Activated T-helper 1 cell treated with anti-CD3 and anti-CD28 coated beads, Interleukin-12 subunit alpha, Interleukin-12 subunit beta, Interleukin-2, Interleukin-4 antibody, amounts not matched to agents 30 ng/mL and 10 ng/mL and 1 ng/mL, durations not matched to agents 14 hours and 24 hours and 36 hours (primary cell): ENCODE measurements at regions of chr22 and their contacts with region 1.

Region 1: DNA sequence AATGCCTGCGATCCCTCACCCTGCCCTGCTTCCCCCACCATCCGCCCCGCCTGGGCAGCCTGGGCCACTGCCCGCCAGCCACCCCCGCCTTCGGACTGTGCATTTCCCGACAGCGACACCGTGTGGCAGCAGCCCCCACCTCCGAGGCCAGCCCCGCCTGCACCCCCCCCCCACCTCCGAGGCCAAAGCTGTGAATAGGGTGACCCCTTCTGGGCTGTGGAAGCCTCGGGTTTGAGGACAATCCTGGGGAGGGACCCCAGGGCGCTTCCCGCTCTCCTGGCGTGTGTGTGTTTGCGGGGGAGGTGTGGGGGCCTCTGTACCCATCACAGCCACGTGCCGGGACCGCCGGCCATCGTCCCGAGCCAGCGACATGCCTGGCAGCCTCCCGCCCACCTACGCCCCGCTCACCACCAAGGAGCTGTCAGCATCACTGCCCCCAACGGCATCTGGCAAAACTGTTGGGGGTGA is 33.8 kb upstream of the PPARA start:
- DNase-seq: peak; percentile 70
- H3K4me3 Mint-ChIP-seq: no peak overlapping the region
- H3K27ac Mint-ChIP-seq: no peak overlapping the region
- H3K4me1 Mint-ChIP-seq: no peaks in the 10 kb centered on the region
- H3K27me3 Mint-ChIP-seq: peaks cover 2% of the 10 kb centered on the region

Region 2: DNA sequence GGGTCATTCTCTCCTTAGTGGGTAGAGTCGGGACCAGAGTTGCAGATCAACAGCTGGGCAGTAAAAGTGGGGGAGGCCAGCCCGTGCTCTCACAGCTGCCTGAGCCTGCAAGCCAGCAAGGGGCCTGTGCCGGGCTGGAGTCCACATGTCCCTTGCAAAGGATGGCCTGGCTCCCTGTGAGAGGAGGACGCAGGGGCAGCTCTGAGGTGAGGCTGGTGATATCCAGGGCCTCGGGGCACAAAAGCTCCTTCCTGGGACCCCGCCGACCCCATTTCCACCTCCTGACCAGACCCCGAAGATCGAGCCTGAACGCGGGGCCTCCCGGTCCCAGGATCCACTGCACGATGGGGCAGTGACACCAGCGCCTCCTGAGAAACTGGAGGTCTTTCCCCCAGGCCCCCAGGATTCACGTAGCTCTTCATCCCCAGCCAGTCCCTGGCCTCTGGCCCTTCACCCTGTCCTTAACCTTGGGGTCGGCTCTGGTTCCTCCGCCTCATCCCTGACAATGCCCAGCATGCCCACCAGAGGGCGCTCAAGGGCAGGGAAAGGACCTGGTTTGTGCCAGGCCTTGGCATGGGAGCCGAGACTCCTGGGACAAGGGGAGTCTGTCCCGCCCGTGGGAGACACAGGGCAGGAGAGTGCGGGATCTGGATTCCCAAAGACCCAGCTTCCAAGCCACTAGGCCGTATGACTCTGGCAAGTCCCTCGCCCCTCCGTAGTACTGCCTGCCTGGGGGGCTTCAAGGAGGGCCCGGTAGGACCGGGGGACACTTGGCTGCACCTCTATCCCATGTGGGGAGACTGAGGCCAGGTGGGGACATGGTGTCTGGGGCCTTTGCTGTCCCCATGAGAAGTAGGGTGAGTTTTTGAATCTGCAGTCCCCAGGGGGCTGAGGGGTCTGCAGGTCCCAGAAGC is 121.8 kb before region 1 on chr22:
- intact Hi-C with region 1: loop called (anchors 1 kb)
- DNase-seq: peak; percentile 58
- H3K4me3 Mint-ChIP-seq: no peak overlapping the region
- H3K27ac Mint-ChIP-seq: no peak overlapping the region
- H3K4me1 Mint-ChIP-seq: no peaks in the 10 kb centered on the region
- H3K27me3 Mint-ChIP-seq: peaks cover 4% of the 10 kb centered on the region

Region 3: DNA sequence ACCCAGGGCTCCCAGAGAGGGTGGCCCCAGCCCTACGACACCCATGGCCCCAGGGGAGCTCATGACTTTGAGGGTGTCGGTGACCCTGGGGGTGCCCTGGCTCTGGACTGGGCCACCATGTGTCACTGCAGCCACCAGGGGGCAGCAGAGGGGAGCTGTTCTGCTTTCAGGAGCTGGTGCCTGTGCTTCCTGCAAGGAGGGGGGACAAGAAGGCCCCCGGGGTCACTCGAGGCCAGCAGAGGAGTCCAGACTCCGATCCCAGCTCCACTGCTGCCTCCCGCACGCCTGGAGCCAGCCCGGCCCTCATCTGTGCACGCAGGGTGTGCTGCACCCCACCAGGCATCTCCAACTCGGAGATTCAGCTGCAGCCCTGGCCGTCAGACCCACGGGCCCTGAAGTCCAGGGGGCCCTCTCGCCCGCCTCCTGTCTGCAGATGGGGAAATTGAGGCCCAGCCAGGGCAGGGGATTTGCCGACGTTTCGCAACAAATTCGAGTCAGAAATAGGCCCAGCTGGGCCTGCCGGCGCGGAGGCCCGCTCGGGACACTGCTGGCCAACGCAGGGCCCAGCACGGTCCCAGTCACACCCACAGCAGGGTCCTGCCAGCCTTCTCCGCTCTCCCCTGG is 110.0 kb before region 1 on chr22:
- intact Hi-C with region 1: loop called (anchors 1 kb)
- DNase-seq: peak; percentile 75
- H3K4me3 Mint-ChIP-seq: no peak overlapping the region
- H3K27ac Mint-ChIP-seq: no peak overlapping the region
- H3K4me1 Mint-ChIP-seq: peaks cover 5% of the 10 kb centered on the region
- H3K27me3 Mint-ChIP-seq: peaks cover 2% of the 10 kb centered on the region

Region 4: DNA sequence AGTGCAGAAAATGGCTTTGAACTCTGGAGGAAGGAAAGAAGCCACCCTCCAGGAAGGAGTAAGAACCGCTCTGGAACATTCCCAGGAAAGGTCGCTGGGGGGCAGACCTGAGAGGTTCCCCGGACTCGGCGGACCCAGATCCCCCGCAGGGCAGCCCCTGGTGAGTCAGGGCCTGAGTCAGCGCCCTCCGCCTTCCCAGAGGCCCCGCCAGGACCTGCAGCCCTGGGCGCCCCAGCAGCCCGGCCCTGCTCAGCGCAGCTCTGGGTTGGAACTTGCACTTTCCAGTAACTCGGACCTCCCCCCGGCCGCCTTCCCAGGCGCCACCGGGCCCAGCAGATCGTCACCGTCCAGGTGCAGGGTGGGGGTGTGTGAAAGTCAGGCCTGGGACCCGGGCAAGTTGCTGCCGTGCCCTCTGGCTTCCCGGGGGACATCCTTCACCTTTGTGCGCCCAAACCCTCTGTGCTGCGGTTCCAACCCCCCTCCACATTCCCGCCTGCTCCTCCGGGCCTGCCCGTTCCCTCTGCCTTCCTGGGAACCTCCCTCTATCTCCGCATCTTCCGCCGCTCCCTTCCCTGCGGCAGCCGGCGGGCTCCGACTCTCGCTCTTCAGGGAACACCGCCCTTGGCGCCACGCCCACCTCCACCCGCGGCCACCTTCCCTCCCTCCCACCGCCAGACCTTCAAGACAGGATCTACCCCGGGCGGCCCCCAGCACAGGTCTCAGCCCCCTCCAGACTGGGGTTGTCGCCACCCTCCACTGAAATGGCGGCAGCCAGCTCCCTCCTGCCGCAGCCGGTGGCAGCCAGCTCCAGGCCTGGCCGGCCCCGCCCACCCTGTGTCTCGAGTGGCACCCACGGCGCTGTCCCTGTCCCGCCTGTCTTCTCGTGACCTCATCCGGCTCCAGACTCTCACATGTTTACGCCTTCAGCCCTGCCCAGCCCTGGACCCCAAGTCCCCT is 102.8 kb before region 1 on chr22:
- intact Hi-C with region 1: loop called (anchors 1 kb)
- DNase-seq: peak; percentile 66
- H3K4me3 Mint-ChIP-seq: peak overlapping the region; percentile 87
- H3K27ac Mint-ChIP-seq: peak overlapping the region; percentile 82
- H3K4me1 Mint-ChIP-seq: peaks cover 6% of the 10 kb centered on the region
- H3K27me3 Mint-ChIP-seq: peaks cover 12% of the 10 kb centered on the region

Region 5: DNA sequence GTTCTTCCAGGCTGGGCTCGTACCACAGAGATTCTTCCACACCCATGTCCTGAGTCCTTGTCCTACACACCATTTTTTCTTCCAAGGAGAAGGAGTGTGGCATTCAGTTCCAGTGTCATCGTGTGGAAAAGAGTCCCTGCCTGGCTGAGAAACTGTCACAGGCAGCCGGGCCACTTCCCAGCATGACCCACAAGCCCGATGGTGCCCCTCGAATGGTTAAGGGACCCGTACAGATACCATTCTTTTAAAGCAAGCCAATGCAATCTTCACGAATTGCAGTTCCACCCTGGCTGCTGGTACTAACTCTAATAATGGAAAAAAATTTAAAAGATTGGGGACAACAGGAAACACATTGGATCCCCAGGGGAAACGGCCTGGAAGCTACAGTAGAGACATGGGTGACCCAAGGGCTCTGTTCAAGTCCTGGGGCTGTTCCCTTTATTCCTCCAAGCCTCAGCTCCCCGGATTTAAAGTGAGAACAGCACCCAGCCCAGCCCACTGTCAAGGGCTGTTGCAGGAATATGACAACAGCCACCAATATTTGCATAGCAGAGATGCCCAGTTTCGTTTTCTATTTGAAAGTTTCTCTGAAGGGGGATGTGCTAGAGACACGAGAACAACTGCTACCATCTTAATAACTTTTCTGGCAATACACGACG is 58.6 kb before region 1 on chr22:
- intact Hi-C with region 1: no loop called
- DNase-seq: peak; percentile 44
- H3K4me3 Mint-ChIP-seq: peak overlapping the region; percentile 34
- H3K27ac Mint-ChIP-seq: peak overlapping the region; percentile 76
- H3K4me1 Mint-ChIP-seq: peaks cover 49% of the 10 kb centered on the region
- H3K27me3 Mint-ChIP-seq: no peaks in the 10 kb centered on the region

Region 6: GRCh38 chr22:46071451-46072109 is 44.9 kb before region 1 on chr22:
- intact Hi-C with region 1: loop called (anchors 5 kb)
- DNase-seq: peak; percentile 22
- H3K4me3 Mint-ChIP-seq: peak overlapping the region; percentile 85
- H3K27ac Mint-ChIP-seq: peak overlapping the region; percentile 92
- H3K4me1 Mint-ChIP-seq: peaks cover 30% of the 10 kb centered on the region
- H3K27me3 Mint-ChIP-seq: peaks cover 5% of the 10 kb centered on the region